Ovary (tissue), 10 donors: ENCODE measurements at regions of chr1 and their contacts with region 1.

Region 1: DNA sequence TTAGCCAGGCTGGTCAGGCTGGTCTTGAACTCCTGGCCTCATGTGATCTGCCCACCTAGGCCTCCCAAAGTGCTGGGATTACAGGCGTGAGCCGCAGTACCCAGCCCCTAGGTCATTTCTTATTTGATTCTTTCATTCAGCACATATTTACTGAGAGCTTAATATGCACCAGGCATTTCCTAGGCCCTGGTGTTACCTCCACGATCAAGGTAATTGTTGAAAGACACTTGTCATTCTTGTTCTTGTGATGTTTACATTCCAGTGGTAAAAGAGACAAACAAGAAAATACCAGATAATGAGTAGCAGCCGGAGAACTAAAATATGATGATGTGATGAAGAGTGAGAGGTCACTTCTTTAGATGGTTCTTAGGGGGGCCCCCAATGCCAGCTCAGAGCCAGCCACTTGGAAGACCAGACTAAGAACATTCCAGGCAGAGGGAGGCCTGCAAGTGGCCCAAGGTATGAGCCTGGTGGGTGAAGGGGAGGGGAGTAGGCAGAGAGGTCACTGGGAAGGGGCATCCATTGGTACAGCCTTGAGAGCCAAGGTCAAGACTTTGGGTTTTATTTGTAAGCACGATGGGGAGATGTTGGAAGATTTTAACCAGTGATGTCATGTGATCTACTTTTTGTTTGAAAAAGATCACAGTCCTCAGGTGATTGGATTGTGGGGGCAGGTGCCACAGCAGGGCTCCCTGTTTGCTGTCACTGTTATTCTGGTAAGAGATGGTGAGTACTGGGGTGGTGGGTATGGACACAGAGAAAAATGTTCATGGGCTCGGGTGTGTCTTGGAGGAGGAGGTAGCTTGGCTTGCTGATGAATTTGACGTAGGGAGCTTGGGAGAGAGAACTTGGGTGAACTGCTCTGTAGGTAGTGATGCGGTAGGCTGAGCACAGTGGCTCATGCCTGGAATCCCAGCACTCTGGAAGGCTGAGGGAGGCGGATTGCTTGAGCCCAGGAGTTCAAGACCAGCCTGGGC is 18.7 kb downstream of the UBE2Q1 start:
- DNase-seq: no peak
- H3K4me3 ChIP-seq: no peak overlapping the region
- H3K27ac ChIP-seq: no peak overlapping the region
- H3K4me1 ChIP-seq: no peaks in the 10 kb centered on the region
- H3K27me3 ChIP-seq: no peaks in the 10 kb centered on the region
- CTCF ChIP-seq: no peak
- EP300 ChIP-seq: no peak
- POLR2A ChIP-seq: no peak

Region 2: GRCh38 chr1:154485106-154485505 is 54.7 kb before region 1 on chr1:
- intact Hi-C with region 1: loop called in 2 of 4 experiments (anchors 5 to 10 kb)
- DNase-seq: peak in 1 of 5 donors; percentile 41
- H3K4me3 ChIP-seq: no peak overlapping the region
- H3K27ac ChIP-seq: no peak overlapping the region
- H3K4me1 ChIP-seq: no peaks in the 10 kb centered on the region
- H3K27me3 ChIP-seq: no peaks in the 10 kb centered on the region
- CTCF ChIP-seq: no peak
- EP300 ChIP-seq: no peak
- POLR2A ChIP-seq: no peak

Region 3: GRCh38 chr1:154584267-154584994 is 44.6 kb after region 1 on chr1:
- intact Hi-C with region 1: no loop called
- DNase-seq: no peak
- H3K4me3 ChIP-seq: no peak overlapping the region
- H3K27ac ChIP-seq: no peak overlapping the region
- H3K4me1 ChIP-seq: peaks cover 4% of the 10 kb centered on the region
- H3K27me3 ChIP-seq: no peaks in the 10 kb centered on the region
- CTCF ChIP-seq: no peak
- EP300 ChIP-seq: no peak
- POLR2A ChIP-seq: no peak

Region 4: GRCh38 chr1:154607609-154608396 is 68.0 kb after region 1 on chr1 and contains the start of gene ADAR:
- intact Hi-C with region 1: no loop called
- DNase-seq: peak; percentile 90 to 95 (median 91)
- H3K4me3 ChIP-seq: peak within 1 kb of the TSS; percentile 89
- H3K27ac ChIP-seq: peak within 1 kb of the TSS; percentile 94 to 96
- H3K4me1 ChIP-seq: peaks cover 14% of the 10 kb centered on the region
- H3K27me3 ChIP-seq: no peaks in the 10 kb centered on the region
- CTCF ChIP-seq: no peak
- EP300 ChIP-seq: peak; percentile 15
- POLR2A ChIP-seq: peak; percentile 61
- total RNA-seq, gene ADAR: 57.2 to 175 (median 134) TPM